ENCODE measurements at regions of chr10 and their contacts with region 1.

Region 1: DNA sequence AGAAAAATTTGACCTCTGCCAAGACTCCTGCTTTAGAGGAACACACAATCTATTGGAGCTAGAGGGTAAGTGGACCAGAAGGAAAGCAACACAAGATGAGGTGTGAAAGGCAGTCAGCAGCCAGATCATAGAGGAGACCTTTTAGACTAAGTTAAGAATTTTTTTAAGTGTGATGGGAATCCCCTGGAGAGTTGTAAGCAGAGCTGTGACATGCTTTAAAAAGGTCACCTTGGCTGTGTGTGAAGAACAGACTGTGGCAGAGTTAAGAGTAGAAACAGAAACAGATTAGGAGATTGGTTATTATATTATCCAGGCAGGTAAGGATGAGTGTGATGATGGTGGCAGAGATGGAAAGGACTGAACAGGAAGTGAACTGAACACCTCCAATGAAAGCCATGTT is 23.5 kb downstream of the CPEB3 start:
- DNase-seq: no peak
- H3K27ac ChIP-seq: no peak overlapping the region
- CTCF ChIP-seq: no peak

Region 2: GRCh38 chr10:92248566-92248965 is 18.8 kb before region 1 on chr10:
- CTCF ChIA-PET with region 1: interaction called, 3 read pairs
- POLR2A ChIA-PET with region 1: interaction called, 11 read pairs
- DNase-seq: no peak
- H3K27ac ChIP-seq: no peak overlapping the region
- CTCF ChIP-seq: no peak

Region 3: GRCh38 chr10:92323079-92323478 is 55.7 kb after region 1 on chr10:
- CTCF ChIA-PET with region 1: no interaction called
- POLR2A ChIA-PET with region 1: no interaction called
- DNase-seq: no peak
- H3K27ac ChIP-seq: no peak overlapping the region
- CTCF ChIP-seq: no peak